HCT116 (cell line): ENCODE measurements at regions of chr2 and their contacts with region 1.

Region 1: GRCh38 chr2:28821295-28821958 is 10.8 kb downstream of the SPDYA start:
- DNase-seq: peak; percentile 72
- ATAC-seq: peak; percentile 95
- H3K4me3 ChIP-seq: no peak overlapping the region
- H3K27ac ChIP-seq: no peak overlapping the region
- H3K4me1 ChIP-seq: no peaks in the 10 kb centered on the region
- H3K27me3 ChIP-seq: no peaks in the 10 kb centered on the region
- CTCF ChIP-seq: peak; percentile 45 to 68 (median 62); a peak in 4 of 6 replicates
- POLR2A ChIP-seq: no peak
- RAD21 ChIP-seq: peak; percentile 85

Region 2: DNA sequence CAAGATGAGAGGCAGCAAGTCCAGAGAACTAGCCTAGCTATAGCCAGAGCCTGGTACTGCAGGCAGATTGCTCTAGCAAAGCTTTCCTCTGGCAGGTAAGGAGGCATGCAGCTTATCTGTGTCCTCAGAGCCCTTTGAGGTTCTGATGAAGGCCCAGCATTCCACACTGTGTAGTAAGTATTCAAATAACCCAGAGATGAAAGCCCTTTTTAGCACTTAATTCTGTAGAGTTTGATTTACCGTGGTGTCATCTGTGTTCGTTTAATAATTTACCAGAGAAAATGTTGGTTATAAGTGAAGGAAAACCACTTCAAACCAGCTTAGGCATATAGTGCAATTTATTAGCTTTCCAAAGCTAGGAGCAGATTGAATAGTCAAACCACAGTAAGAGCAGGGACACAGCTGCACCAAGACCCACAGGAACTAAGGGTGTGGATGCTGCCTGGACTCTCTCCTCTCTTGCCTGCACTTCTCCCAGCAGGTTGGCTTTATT is 704.3 kb before region 1 on chr2:
- CTCF ChIA-PET with region 1: no interaction called
- POLR2A ChIA-PET with region 1: no interaction called
- RAD21 ChIA-PET with region 1: no interaction called
- intact Hi-C with region 1: no loop called
- DNase-seq: no peak
- ATAC-seq: peak; percentile 70
- H3K4me3 ChIP-seq: no peak overlapping the region
- H3K27ac ChIP-seq: no peak overlapping the region
- H3K4me1 ChIP-seq: peaks cover 3% of the 10 kb centered on the region in 2 experiments; a peak in 2 of 4 replicates
- H3K27me3 ChIP-seq: no peaks in the 10 kb centered on the region
- CTCF ChIP-seq: no peak
- POLR2A ChIP-seq: no peak
- RAD21 ChIP-seq: no peak

Region 3: DNA sequence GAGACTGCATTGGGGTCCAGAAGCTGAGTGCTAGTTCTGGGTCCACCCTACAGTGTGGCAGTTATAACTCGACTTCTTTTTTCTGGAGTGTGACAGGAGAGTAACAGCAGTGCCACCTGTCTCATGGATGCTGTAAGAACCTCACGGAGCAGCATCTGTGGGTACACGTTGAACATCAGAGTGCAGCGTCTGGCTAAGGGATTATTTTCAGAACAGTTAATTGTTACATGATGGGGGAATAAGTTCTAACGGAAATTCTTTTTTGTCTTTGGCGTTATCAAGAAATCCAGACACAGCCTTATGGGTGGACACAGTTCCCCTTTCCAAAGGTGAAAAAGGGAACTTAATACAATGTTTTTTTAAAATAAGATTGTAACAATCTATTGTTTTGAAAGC is 131.4 kb after region 1 on chr2:
- CTCF ChIA-PET with region 1: interaction called, 5 read pairs
- POLR2A ChIA-PET with region 1: no interaction called
- RAD21 ChIA-PET with region 1: no interaction called
- intact Hi-C with region 1: loop called (anchors 2 kb)
- DNase-seq: no peak
- ATAC-seq: no peak
- H3K4me3 ChIP-seq: no peak overlapping the region
- H3K27ac ChIP-seq: no peak overlapping the region
- H3K4me1 ChIP-seq: peaks cover 0 to 31% of the 10 kb centered on the region in 2 experiments; a peak in 2 of 4 replicates
- H3K27me3 ChIP-seq: no peaks in the 10 kb centered on the region
- CTCF ChIP-seq: peak; percentile 7 to 47 (median 29); a peak in 2 of 6 replicates
- POLR2A ChIP-seq: no peak
- RAD21 ChIP-seq: peak; percentile 62